ENCODE measurements at regions of chr6 and their contacts with region 1.

Region 1: GRCh38 chr6:26065952-26066380 is 21.3 kb upstream of the HFE start:
- H3K4me3 Mint-ChIP-seq: no peak overlapping the region
- H3K27ac Mint-ChIP-seq: peak overlapping the region; percentile 88
- H3K4me1 Mint-ChIP-seq: peaks cover 24% of the 10 kb centered on the region
- H3K27me3 Mint-ChIP-seq: peaks cover 2% of the 10 kb centered on the region

Region 2: DNA sequence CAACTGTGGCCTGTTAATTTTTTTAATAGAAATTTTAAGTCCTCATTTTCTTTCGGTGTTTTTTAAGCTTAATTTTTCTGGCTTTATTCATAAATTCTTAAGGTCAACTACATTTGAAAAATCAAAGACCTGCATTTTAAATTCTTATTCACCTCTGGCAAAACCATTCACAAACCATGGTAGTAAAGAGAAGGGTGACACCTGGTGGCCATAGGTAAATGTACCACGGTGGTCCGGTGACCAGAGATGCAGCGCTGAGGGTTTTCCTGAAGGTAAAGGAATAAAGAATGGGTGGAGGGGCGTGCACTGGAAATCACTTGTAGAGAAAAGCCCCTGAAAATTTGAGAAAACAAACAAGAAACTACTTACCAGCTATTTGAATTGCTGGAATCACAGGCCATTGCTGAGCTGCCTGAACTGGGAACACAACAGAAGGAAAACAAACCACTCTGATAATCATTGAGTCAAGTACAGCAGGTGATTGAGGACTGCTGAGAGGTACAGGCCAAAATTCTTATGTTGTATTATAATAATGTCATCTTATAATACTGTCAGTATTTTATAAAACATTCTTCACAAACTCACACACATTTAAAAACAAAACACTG is 31.4 kb after region 1 on chr6:
- intact Hi-C with region 1: loop called (anchors 1 kb)
- H3K4me3 Mint-ChIP-seq: no peak overlapping the region
- H3K27ac Mint-ChIP-seq: no peak overlapping the region
- H3K4me1 Mint-ChIP-seq: peaks cover 31% of the 10 kb centered on the region
- H3K27me3 Mint-ChIP-seq: peaks cover 6% of the 10 kb centered on the region

Region 3: DNA sequence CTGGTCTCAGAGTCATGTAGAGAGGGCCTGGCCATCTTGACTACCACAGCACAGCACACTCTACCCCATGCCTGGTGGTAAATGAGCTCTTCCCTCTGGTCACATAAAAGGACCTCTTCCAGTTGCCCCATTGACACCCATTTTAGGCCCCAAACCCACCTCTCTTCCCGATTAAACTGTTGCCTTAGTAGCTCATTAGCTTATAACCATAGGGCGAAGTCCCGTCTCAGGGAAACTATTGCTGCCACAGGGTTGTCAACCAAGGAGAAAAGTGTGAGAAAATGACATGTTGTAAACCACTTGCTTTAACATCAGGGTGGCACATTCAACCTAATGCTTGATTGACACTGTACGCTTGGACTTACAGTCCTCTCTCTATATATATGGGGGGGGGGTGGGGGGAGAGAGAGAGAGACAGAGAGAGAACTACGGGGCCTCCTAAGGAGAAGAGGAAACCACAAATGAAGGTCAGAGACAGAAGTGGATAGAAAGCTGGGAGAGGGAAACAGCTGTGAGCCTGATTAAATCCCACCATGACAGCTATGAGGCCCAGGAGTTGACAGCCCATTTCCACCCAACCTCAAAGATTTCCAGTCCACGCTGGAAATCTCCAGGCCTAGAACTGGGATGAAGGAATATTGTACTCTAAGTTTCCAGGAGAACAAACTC is 419.3 kb after region 1 on chr6:
- intact Hi-C with region 1: no loop called
- H3K4me3 Mint-ChIP-seq: no peak overlapping the region
- H3K27ac Mint-ChIP-seq: peak overlapping the region; percentile 7
- H3K4me1 Mint-ChIP-seq: peaks cover 27% of the 10 kb centered on the region
- H3K27me3 Mint-ChIP-seq: no peaks in the 10 kb centered on the region

Measured in dendritic cell treated with granulocyte-macrophage colony-stimulating factor and Interleukin-4, amounts not matched to agents 40 ng/mL and 50 ng/mL, for 4 days (primary cell).